PC-9 (cell line): ENCODE measurements at regions of chr2 and their contacts with region 1.

Region 1: GRCh38 chr2:152200562-152201465 is 25.3 kb upstream of the STAM2 start:
- DNase-seq: peak; percentile 94 to 97
- H3K4me3 ChIP-seq: peak overlapping the region; percentile 36; the same call in 1 of the 2 replicates
- H3K27ac ChIP-seq: peak overlapping the region; percentile 77
- H3K4me1 ChIP-seq: peaks cover 24% of the 10 kb centered on the region
- H3K27me3 ChIP-seq: no peaks in the 10 kb centered on the region
- CTCF ChIP-seq: no peak

Region 2: GRCh38 chr2:152284398-152284797 is 83.6 kb after region 1 on chr2:
- CTCF ChIA-PET with region 1: no interaction called
- POLR2A ChIA-PET with region 1: no interaction called
- intact Hi-C with region 1: no loop called
- DNase-seq: no peak
- H3K4me3 ChIP-seq: no peak overlapping the region
- H3K27ac ChIP-seq: no peak overlapping the region
- H3K4me1 ChIP-seq: no peaks in the 10 kb centered on the region
- H3K27me3 ChIP-seq: no peaks in the 10 kb centered on the region
- CTCF ChIP-seq: no peak

Region 3: GRCh38 chr2:152542995-152543481 is 342.2 kb after region 1 on chr2:
- CTCF ChIA-PET with region 1: no interaction called
- POLR2A ChIA-PET with region 1: no interaction called
- intact Hi-C with region 1: loop called (anchors 1 kb)
- DNase-seq: peak; percentile 35 to 90
- H3K4me3 ChIP-seq: peak overlapping the region; percentile 10; the same call in 1 of the 2 replicates
- H3K27ac ChIP-seq: peak overlapping the region; percentile 78
- H3K4me1 ChIP-seq: peaks cover 37% of the 10 kb centered on the region
- H3K27me3 ChIP-seq: no peaks in the 10 kb centered on the region
- CTCF ChIP-seq: no peak